ENCODE measurements at regions of chr2 and their contacts with region 1.

Region 1: DNA sequence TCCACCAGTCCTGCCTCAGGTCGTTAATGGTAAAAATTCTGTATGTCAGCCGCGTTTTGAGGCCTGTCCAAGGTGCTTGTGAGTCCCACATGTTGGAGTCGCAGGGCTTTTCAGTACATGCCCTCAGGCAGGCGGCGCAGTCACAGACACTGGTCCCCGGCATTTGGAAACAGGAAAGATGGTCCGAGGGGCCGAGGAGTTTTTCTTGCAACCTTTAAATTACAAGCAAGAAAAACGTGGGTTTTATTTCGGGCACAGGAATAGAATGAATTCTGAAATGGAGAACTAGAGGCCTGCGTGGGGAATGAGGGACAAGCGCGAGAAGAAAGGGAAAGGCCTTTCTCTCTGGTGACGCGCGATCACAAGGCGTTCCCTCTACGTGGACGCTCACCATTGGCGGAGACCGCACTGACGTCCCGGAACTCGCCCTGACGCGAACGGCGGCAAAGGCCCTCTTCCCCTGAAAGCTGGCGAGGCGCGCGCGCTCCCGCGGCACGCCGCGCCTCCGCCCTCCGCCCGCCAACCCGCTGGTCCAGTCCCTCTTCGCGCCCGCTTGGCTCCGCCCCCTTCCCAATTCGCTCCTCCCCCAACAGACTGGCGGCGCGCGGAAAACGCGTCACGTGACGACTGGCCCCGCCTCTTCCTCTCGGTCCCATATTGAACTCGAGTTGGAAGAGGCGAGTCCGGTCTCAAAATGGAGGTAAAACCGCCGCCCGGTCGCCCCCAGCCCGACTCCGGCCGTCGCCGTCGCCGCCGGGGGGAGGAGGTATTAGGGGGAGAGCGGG is at the start of gene HNRNPA3:
- DNase-seq: peak; percentile 100
- H3K4me3 Mint-ChIP-seq: peak within 1 kb of the TSS; percentile 97
- H3K27ac Mint-ChIP-seq: peak within 1 kb of the TSS; percentile 99
- H3K4me1 Mint-ChIP-seq: peaks cover 58% of the 10 kb centered on the region
- H3K27me3 Mint-ChIP-seq: no peaks in the 10 kb centered on the region
- total RNA-seq, gene HNRNPA3: 326 and 333 TPM in 2 replicates

Region 2: GRCh38 chr2:176997074-176997791 is 215.1 kb before region 1 on chr2:
- intact Hi-C with region 1: no loop called
- DNase-seq: peak; percentile 2
- H3K4me3 Mint-ChIP-seq: no peak overlapping the region
- H3K27ac Mint-ChIP-seq: peak overlapping the region; percentile 82
- H3K4me1 Mint-ChIP-seq: peaks cover 29% of the 10 kb centered on the region
- H3K27me3 Mint-ChIP-seq: peaks cover 12% of the 10 kb centered on the region

Region 3: DNA sequence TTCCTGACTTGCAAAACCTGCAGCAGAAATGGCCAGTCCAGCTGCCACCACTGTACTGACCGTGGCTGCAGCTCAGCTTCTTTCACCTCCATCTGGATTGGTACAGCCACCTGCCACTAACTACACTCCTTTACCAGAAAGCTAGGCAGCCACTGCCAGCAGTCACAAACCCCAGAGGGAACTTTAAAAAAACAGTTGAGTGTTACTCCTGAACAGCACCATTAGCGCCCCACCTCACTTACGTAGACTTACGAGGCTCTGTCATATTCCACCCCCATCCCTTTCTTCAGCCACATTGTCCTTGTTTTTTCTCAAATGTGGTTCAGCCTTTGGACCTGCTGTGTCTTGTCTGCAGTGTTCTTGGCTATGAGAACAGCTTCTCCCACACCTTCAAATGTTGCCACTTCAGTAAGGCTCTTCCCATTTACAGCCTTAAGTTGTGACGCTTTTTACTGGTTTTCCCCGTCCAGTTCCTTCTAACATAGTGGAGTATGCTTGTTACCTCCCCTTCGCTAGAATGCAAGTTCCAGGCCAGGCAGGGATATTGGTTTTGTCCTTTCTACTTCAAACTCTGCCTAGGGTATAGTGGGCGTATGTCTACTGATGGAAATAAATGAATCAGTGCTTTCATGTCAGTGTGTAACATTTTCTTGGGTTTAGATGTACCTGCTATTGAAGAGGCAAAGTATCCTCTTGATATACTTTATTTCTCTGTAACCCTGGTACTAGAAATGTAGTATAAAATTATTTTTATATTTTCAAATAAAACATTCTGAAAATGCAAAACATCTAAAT is 17.3 kb after region 1 on chr2:
- intact Hi-C with region 1: loop called (anchors 2 kb)
- DNase-seq: no peak
- H3K4me3 Mint-ChIP-seq: no peak overlapping the region
- H3K27ac Mint-ChIP-seq: peak overlapping the region; percentile 74
- H3K4me1 Mint-ChIP-seq: peaks cover 45% of the 10 kb centered on the region
- H3K27me3 Mint-ChIP-seq: no peaks in the 10 kb centered on the region

Region 4: DNA sequence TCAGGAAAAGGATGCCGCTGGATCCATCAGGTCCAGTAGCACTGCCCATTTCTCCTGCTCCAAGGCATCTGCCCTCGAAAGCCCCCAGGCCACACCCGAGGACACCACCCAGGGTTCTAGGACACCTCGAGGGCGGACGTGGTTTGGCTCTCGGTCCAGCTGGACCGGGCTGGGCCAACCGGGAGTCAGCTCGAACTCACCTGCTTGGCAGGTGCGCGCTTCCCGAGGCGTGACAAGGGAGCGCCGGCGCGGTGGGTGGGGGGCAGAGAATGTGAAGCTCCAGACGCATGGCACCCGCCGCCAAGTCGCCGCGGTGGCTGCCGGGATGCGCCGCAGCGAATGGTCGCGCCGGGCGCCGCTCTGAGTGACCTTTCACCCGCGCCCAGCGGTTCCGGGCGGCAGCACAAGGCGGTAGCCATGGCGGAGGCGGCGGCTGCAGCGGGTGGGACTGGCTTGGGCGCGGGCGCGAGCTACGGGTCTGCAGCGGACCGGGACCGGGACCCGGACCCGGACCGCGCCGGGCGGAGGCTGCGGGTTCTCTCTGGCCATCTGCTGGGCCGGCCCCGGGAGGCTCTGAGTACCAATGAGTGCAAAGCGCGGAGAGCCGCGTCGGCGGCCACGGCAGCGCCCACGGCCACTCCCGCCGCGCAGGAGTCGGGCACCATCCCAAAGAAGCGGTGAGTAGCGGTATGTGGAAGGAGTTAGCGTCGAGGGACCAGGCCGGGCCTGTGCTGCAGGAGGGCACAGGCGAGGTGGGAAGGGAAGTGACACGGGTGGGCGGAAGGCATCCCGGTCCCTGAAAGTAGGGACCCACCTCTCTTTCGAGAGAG is 180.3 kb after region 1 on chr2 and contains the start of gene AGPS:
- intact Hi-C with region 1: loop called (anchors 1 kb)
- DNase-seq: peak; percentile 80
- H3K4me3 Mint-ChIP-seq: peak within 1 kb of the TSS; percentile 90
- H3K27ac Mint-ChIP-seq: peak within 1 kb of the TSS; percentile 92
- H3K4me1 Mint-ChIP-seq: peaks cover 58% of the 10 kb centered on the region
- H3K27me3 Mint-ChIP-seq: no peaks in the 10 kb centered on the region
- total RNA-seq, gene AGPS: 70.1 and 71.8 TPM in 2 replicates

Region 5: GRCh38 chr2:177552422-177553175 is 340.3 kb after region 1 on chr2:
- intact Hi-C with region 1: loop called (anchors 2 kb)
- DNase-seq: peak; percentile 88
- H3K4me3 Mint-ChIP-seq: peak overlapping the region; percentile 95
- H3K27ac Mint-ChIP-seq: peak overlapping the region; percentile 100
- H3K4me1 Mint-ChIP-seq: peaks cover 16% of the 10 kb centered on the region
- H3K27me3 Mint-ChIP-seq: no peaks in the 10 kb centered on the region